ENCODE measurements at regions of chr9 and their contacts with region 1.

Region 1: GRCh38 chr9:34376596-34377403 is at the start of gene MYORG:
- DNase-seq: peak; percentile 85 to 96 (median 93)
- ATAC-seq: peak; percentile 86
- H3K4me3 ChIP-seq: peak within 1 kb of the TSS; percentile 82
- H3K4me3 Mint-ChIP-seq: peak within 1 kb of the TSS; percentile 78 to 94 (median 91)
- H3K27ac ChIP-seq: peak within 1 kb of the TSS; percentile 57
- H3K27ac Mint-ChIP-seq: peak within 1 kb of the TSS; percentile 52 to 92 (median 81)
- H3K4me1 ChIP-seq: peaks cover 16 to 22% of the 10 kb centered on the region in 2 donors
- H3K4me1 Mint-ChIP-seq: peaks cover 27 to 49% (median 45%) of the 10 kb centered on the region in 7 donors
- H3K27me3 ChIP-seq: no peaks in the 10 kb centered on the region
- H3K27me3 Mint-ChIP-seq: peaks cover 0 to 5% (median 0%) of the 10 kb centered on the region in 5 donors
- total RNA-seq, gene MYORG: 0.60 to 1.9 (median 0.78) TPM

Region 2: DNA sequence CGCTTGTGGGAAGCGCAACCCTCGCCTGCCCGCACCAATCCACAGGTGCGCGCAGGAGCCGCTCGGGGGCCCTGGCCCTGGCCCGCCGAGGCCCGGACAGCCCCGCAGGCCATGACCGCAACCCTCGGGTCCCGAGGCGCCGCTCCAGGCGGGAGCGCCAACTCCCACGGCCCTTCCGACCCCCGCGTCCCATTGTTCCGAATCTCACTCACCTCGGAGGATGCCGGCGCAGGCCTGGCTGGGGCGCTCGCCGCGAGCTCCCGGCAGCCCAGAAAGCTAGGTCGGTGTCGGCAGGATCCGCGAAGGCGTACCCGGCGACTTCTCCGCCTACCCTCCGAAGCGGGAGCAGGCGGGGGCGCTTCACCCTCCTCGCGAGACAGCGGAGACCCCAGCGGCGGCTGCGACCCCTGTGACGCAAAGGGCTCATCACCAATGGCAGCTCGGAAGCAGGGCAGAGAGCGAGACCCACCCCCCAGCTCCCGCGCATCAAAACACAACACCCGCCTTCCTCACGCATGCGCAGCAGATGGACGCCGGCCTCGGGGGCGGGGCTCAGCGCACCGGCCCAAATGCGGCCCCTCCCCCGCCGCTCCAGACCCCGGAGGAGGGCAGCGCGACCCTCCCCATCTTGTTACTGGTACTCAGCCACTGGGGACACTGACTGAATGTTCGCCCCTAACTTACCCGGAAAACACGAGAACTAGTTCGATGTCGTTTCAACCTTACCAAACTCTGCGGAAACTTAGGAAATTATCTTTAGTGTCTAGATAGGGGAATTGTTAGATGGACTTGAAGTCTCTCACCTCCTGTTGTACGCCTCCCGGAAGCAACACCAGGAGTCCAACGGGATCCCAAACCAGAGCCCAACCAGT is 1826.0 kb before region 1 on chr9:
- CTCF ChIA-PET with region 1: no interaction called
- POLR2A ChIA-PET with region 1: no interaction called
- intact Hi-C with region 1: loop called in 1 of 2 experiments (anchors 5 kb)
- DNase-seq: peak; percentile 89 to 99 (median 96)
- ATAC-seq: peak; percentile 90
- H3K4me3 ChIP-seq: peak overlapping the region; percentile 93
- H3K4me3 Mint-ChIP-seq: peak overlapping the region; percentile 92 to 100 (median 99)
- H3K27ac ChIP-seq: peak overlapping the region; percentile 97
- H3K27ac Mint-ChIP-seq: peak overlapping the region; percentile 96 to 100 (median 98)
- H3K4me1 ChIP-seq: peaks cover 13 to 20% of the 10 kb centered on the region in 2 donors
- H3K4me1 Mint-ChIP-seq: peaks cover 31 to 70% (median 56%) of the 10 kb centered on the region in 7 donors
- H3K27me3 ChIP-seq: no peaks in the 10 kb centered on the region
- H3K27me3 Mint-ChIP-seq: no peaks in the 10 kb centered on the region

Region 3: GRCh38 chr9:33924978-33925797 is 451.6 kb before region 1 on chr9:
- CTCF ChIA-PET with region 1: no interaction called
- POLR2A ChIA-PET with region 1: no interaction called
- intact Hi-C with region 1: loop called (anchors 2 to 5 kb)
- DNase-seq: peak in 3 of 9 donors; percentile 11 to 21 (median 15)
- ATAC-seq: peak; percentile 19
- H3K4me3 ChIP-seq: no peak overlapping the region
- H3K4me3 Mint-ChIP-seq: no peak overlapping the region
- H3K27ac ChIP-seq: no peak overlapping the region
- H3K27ac Mint-ChIP-seq: peak overlapping the region in 8 of 9 donors; percentile 30 to 82 (median 59)
- H3K4me1 ChIP-seq: no peaks in the 10 kb centered on the region
- H3K4me1 Mint-ChIP-seq: peaks cover 0 to 2% (median 0%) of the 10 kb centered on the region in 7 donors
- H3K27me3 ChIP-seq: no peaks in the 10 kb centered on the region
- H3K27me3 Mint-ChIP-seq: no peaks in the 10 kb centered on the region

Region 4: DNA sequence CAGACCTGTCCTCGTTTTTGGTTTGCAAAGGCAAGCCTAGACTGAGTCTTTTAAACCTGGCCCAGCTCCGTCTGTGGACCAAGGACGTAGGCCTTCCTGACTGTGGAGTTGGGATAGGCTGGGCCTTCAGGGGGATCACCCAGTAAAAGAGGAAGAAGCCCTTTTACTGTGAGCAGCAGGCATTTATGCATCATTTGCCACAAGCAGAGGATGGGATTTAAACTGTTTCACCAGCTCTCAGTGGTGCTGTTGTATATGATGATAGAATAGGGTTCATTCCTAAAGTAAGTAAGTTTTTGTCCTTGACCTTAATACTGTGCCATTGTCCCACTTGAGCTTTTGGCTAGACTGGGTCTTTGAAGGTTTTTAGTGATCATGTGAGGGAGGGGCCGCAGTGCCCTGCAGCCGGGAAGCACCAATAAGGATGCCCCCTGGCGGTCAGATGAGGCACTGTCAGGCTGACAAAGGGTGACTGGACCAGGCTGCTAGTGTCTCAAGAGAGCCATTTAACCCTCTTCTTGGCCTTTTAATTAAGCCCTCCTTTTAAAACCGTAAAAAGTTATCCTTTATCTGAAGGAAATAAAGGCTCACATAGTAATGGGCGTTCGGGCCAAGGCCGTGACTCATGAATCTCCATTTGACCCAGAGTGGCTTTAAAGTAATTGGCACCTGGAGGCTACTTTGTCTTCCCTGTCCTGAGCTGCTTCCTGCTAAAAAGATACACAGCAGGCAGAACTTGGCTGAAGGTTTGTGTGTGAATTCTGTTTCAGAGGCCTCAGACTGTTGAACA is 123.9 kb before region 1 on chr9:
- CTCF ChIA-PET with region 1: interaction called, 3 read pairs
- POLR2A ChIA-PET with region 1: interaction called, 6 read pairs
- intact Hi-C with region 1: loop called (anchors 1 kb)
- DNase-seq: peak; percentile 38 to 70 (median 56)
- ATAC-seq: peak; percentile 85
- H3K4me3 ChIP-seq: no peak overlapping the region
- H3K4me3 Mint-ChIP-seq: no peak overlapping the region
- H3K27ac ChIP-seq: no peak overlapping the region
- H3K27ac Mint-ChIP-seq: peak overlapping the region in 7 of 9 donors; percentile 15 to 69 (median 46)
- H3K4me1 ChIP-seq: peaks cover 0 to 6% of the 10 kb centered on the region in 2 donors
- H3K4me1 Mint-ChIP-seq: peaks cover 9 to 21% (median 17%) of the 10 kb centered on the region in 7 donors
- H3K27me3 ChIP-seq: no peaks in the 10 kb centered on the region
- H3K27me3 Mint-ChIP-seq: no peaks in the 10 kb centered on the region

Region 5: DNA sequence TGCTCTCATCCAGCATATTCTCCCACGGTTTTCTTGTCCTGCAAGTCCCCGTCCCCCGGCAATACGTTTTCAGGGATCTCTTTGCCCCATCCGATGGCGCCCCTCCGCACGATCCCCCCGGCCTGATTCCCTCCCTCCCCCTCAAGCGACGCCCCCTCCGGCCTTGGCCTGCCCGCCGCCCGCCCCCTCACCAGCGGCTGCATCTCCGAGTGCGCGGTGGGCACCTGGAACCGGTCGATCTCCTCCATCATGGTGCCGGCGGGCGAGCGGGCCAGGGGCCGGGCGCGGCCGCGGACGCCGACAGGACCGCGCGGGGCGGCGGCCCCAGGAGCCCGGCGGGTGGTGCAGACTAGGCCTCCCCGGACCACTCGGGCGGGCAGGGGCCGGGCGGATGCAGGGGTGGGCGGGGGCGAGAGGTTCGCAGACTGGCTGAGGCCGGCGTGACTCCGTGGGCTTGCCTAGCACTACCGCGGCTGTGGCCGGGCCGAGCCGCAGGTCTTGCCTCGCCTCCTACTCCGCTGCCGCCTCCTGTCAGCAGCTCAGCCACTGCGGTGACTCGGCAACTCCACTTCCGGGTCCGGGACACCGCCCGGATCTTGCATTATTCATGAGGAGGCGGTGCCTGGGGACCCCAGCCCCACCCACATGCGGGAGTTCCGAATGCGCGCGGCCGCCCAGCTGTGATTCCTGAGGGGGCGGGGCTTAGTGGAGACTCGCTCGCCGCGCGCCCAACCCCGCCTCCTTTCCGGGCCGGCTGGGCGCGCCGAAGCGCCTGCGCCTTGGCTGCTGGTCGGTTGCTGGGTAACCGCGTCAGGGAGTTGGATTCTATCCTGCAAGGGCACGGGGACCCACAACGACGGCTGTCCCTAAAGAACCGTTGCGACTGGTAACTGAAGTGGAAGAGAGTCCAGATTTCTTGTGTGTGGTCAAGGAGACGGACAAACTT is 81.5 kb after region 1 on chr9 and contains the starts of genes DNAI1 and FAM219A:
- CTCF ChIA-PET with region 1: no interaction called
- POLR2A ChIA-PET with region 1: interaction called, 3 read pairs
- intact Hi-C with region 1: loop called (anchors 1 kb)
- DNase-seq: peak; percentile 97 to 100 (median 99)
- ATAC-seq: peak; percentile 98
- H3K4me3 ChIP-seq: peak within 1 kb of the TSS; percentile 68
- H3K4me3 Mint-ChIP-seq: peak within 1 kb of the TSS; percentile 86 to 93 (median 92)
- H3K27ac ChIP-seq: peak within 1 kb of the TSS; percentile 41
- H3K27ac Mint-ChIP-seq: peak within 1 kb of the TSS; percentile 57 to 93 (median 82)
- H3K4me1 ChIP-seq: peaks cover 13 to 16% of the 10 kb centered on the region in 2 donors
- H3K4me1 Mint-ChIP-seq: peaks cover 28 to 46% (median 38%) of the 10 kb centered on the region in 7 donors
- H3K27me3 ChIP-seq: no peaks in the 10 kb centered on the region
- H3K27me3 Mint-ChIP-seq: peaks cover 0 to 23% (median 6%) of the 10 kb centered on the region in 5 donors
- total RNA-seq, gene DNAI1: not detected
- total RNA-seq, gene FAM219A: 12.3 to 14.6 (median 13.4) TPM

Region 6: GRCh38 chr9:34665381-34666250 is 288.8 kb after region 1 on chr9:
- CTCF ChIA-PET with region 1: no interaction called
- POLR2A ChIA-PET with region 1: interaction called, 3 read pairs
- intact Hi-C with region 1: loop called (anchors 1 to 2 kb)
- DNase-seq: peak; percentile 74 to 90 (median 84)
- ATAC-seq: peak; percentile 90
- H3K4me3 ChIP-seq: peak overlapping the region; percentile 99
- H3K4me3 Mint-ChIP-seq: peak overlapping the region; percentile 89 to 97 (median 94)
- H3K27ac ChIP-seq: peak overlapping the region; percentile 98
- H3K27ac Mint-ChIP-seq: peak overlapping the region; percentile 86 to 98 (median 97)
- H3K4me1 ChIP-seq: peaks cover 33 to 40% of the 10 kb centered on the region in 2 donors
- H3K4me1 Mint-ChIP-seq: peaks cover 37 to 58% (median 50%) of the 10 kb centered on the region in 7 donors
- H3K27me3 ChIP-seq: no peaks in the 10 kb centered on the region
- H3K27me3 Mint-ChIP-seq: no peaks in the 10 kb centered on the region

Region 7: GRCh38 chr9:35748858-35749514 is 1372.2 kb after region 1 on chr9 and contains the starts of genes GBA2 and RGP1:
- CTCF ChIA-PET with region 1: no interaction called
- POLR2A ChIA-PET with region 1: no interaction called
- intact Hi-C with region 1: loop called in 1 of 2 experiments (anchors 1 kb)
- DNase-seq: peak; percentile 36 to 82 (median 51)
- ATAC-seq: peak; percentile 84
- H3K4me3 ChIP-seq: peak within 1 kb of the TSS; percentile 84
- H3K4me3 Mint-ChIP-seq: peak within 1 kb of the TSS; percentile 89 to 98 (median 96)
- H3K27ac ChIP-seq: peak within 1 kb of the TSS; percentile 87
- H3K27ac Mint-ChIP-seq: peak within 1 kb of the TSS; percentile 89 to 97 (median 96)
- H3K4me1 ChIP-seq: peaks cover 32 to 33% of the 10 kb centered on the region in 2 donors
- H3K4me1 Mint-ChIP-seq: peaks cover 36 to 66% (median 49%) of the 10 kb centered on the region in 7 donors
- H3K27me3 ChIP-seq: no peaks in the 10 kb centered on the region
- H3K27me3 Mint-ChIP-seq: no peaks in the 10 kb centered on the region
- total RNA-seq, gene GBA2: 22.7 to 55.4 (median 49.9) TPM
- total RNA-seq, gene RGP1: 21.2 to 28.8 (median 23.3) TPM

Measured in naive thymus-derived CD4-positive, alpha-beta T cell (primary cell).